Activated CD4-positive, alpha-beta memory T cell treated with anti-CD3 and anti-CD28 coated beads, Interleukin-2, amount 10 ng/mL, durations not matched to agents 7 days and 5 days (primary cell): ENCODE measurements at regions of chr18 and their contacts with region 1.

Region 1: GRCh38 chr18:21194871-21195771 is 46.9 kb upstream of the GREB1L start:
- DNase-seq: no peak
- H3K4me3 Mint-ChIP-seq: no peak overlapping the region
- H3K27ac Mint-ChIP-seq: no peak overlapping the region
- H3K4me1 Mint-ChIP-seq: no peaks in the 10 kb centered on the region
- H3K27me3 Mint-ChIP-seq: peaks cover 22% of the 10 kb centered on the region

Region 2: GRCh38 chr18:21444465-21445023 is 249.4 kb after region 1 on chr18:
- CTCF ChIA-PET with region 1: interaction called, 11 read pairs
- POLR2A ChIA-PET with region 1: no interaction called
- DNase-seq: no peak
- H3K4me3 Mint-ChIP-seq: no peak overlapping the region
- H3K27ac Mint-ChIP-seq: no peak overlapping the region
- H3K4me1 Mint-ChIP-seq: no peaks in the 10 kb centered on the region
- H3K27me3 Mint-ChIP-seq: peaks cover 24% of the 10 kb centered on the region